GM10248 (cell line): ENCODE measurements at regions of chr3 and their contacts with region 1.

Region 1: GRCh38 chr3:143885780-143886427 is 37.6 kb upstream of the SLC9A9 start:
- DNase-seq: peak; percentile 49
- CTCF ChIP-seq: peak; percentile 76

Region 2: GRCh38 chr3:143795874-143796273 is 90.0 kb before region 1 on chr3:
- CTCF ChIA-PET with region 1: no interaction called
- POLR2A ChIA-PET with region 1: no interaction called
- DNase-seq: no peak
- CTCF ChIP-seq: no peak

Region 3: DNA sequence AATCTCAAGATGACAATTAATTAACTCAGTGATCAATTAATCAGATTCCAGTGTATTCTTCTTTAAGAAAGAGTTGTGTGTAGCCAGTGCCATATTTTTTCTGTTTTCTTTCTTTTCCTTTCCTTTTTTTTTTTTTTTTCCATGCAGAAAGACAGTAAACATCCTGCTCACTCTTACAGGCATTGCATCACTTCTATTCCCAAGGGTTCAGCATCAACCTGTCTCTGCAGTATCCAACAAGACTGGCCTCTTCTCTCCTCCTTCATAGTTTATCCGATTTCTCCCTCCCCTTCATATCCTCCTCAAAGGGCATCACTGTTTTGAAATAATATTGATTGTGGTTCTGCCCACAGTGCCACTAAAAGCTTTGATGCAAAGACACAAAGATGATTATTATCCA is 20.6 kb before region 1 on chr3:
- CTCF ChIA-PET with region 1: interaction called, 11 read pairs
- POLR2A ChIA-PET with region 1: no interaction called
- DNase-seq: no peak
- CTCF ChIP-seq: no peak

Region 4: DNA sequence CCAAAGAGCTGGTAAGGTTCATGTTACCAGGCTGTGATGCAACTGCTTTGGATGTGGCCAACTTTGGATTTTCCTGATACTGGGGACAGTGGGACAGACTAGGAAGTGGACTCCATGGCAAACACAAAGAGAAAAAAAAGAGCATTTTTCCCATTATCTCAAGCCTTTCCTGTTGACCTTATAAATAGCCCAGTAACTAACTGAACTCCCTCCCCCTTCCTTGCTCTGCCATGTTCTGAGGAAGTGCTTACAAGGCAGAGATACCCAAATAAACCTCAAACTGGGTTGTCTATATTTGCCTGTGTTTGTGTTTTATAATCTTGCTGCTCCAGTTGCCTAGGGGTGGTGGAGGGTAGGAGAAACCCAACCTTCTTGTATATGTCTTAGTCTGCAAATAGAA is 10.4 kb before region 1 on chr3:
- CTCF ChIA-PET with region 1: interaction called, 28 read pairs
- POLR2A ChIA-PET with region 1: no interaction called
- DNase-seq: no peak
- CTCF ChIP-seq: no peak

Region 5: DNA sequence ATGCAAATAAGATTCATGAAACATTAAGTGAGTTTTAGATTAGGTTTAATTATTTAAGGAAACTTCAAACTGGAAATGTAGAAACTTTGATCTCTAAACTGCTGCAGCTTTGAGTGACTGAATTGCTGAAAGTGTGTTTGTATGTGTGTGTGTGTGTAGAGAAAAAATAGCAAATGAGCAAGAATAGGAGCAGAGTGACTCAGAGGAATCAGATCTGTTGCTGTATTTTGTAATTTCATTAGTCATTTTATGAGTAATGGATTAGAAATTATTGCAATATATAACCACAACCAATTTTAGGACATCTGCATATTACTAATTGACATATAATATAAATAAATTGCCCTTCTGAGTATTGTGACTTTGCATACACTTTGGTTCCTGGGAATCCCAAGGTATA is 15.2 kb after region 1 on chr3:
- CTCF ChIA-PET with region 1: interaction called, 62 read pairs
- POLR2A ChIA-PET with region 1: no interaction called
- DNase-seq: no peak
- CTCF ChIP-seq: no peak